CD4-positive, alpha-beta memory T cell (primary cell): ENCODE measurements at regions of chr11 and their contacts with region 1.

Region 1: GRCh38 chr11:117178210-117179034 is at the start of gene SIDT2:
- DNase-seq: peak; percentile 85 to 90 (median 86)
- H3K4me3 ChIP-seq: peak within 1 kb of the TSS; percentile 76 to 80
- H3K4me3 Mint-ChIP-seq: peak within 1 kb of the TSS; percentile 94 to 99 (median 94)
- H3K27ac ChIP-seq: peak within 1 kb of the TSS; percentile 73
- H3K27ac Mint-ChIP-seq: peak within 1 kb of the TSS; percentile 93 to 98 (median 97)
- H3K4me1 ChIP-seq: peaks cover 30% of the 10 kb centered on the region
- H3K4me1 Mint-ChIP-seq: peaks cover 21 to 45% (median 34%) of the 10 kb centered on the region in 4 donors
- H3K27me3 ChIP-seq: no peaks in the 10 kb centered on the region
- H3K27me3 Mint-ChIP-seq: no peaks in the 10 kb centered on the region
- total RNA-seq, gene SIDT2: 60.2 to 67.3 TPM

Region 2: GRCh38 chr11:116772443-116773202 is 405.8 kb before region 1 on chr11 and contains the start of gene BUD13:
- CTCF ChIA-PET with region 1: no interaction called
- POLR2A ChIA-PET with region 1: interaction called, 10 read pairs
- intact Hi-C with region 1: loop called (anchors 5 kb)
- DNase-seq: peak; percentile 92 to 96 (median 93)
- H3K4me3 ChIP-seq: peak within 1 kb of the TSS; percentile 71 to 93
- H3K4me3 Mint-ChIP-seq: peak within 1 kb of the TSS; percentile 97 to 100 (median 98)
- H3K27ac ChIP-seq: peak within 1 kb of the TSS; percentile 94
- H3K27ac Mint-ChIP-seq: peak within 1 kb of the TSS; percentile 94 to 99 (median 98)
- H3K4me1 ChIP-seq: peaks cover 24% of the 10 kb centered on the region
- H3K4me1 Mint-ChIP-seq: peaks cover 24 to 47% (median 35%) of the 10 kb centered on the region in 4 donors
- H3K27me3 ChIP-seq: no peaks in the 10 kb centered on the region
- H3K27me3 Mint-ChIP-seq: no peaks in the 10 kb centered on the region
- total RNA-seq, gene BUD13: 19.9 to 23.1 TPM

Region 3: GRCh38 chr11:117128289-117128688 is 50.1 kb before region 1 on chr11:
- CTCF ChIA-PET with region 1: no interaction called
- POLR2A ChIA-PET with region 1: no interaction called
- intact Hi-C with region 1: no loop called
- DNase-seq: no peak
- H3K4me3 ChIP-seq: no peak overlapping the region
- H3K4me3 Mint-ChIP-seq: no peak overlapping the region
- H3K27ac ChIP-seq: no peak overlapping the region
- H3K27ac Mint-ChIP-seq: no peak overlapping the region
- H3K4me1 ChIP-seq: no peaks in the 10 kb centered on the region
- H3K4me1 Mint-ChIP-seq: peaks cover 0 to 3% (median 1%) of the 10 kb centered on the region in 4 donors
- H3K27me3 ChIP-seq: no peaks in the 10 kb centered on the region
- H3K27me3 Mint-ChIP-seq: peaks cover 0 to 2% of the 10 kb centered on the region in 2 donors

Region 4: GRCh38 chr11:117143871-117144476 is 34.4 kb before region 1 on chr11 and contains the start of gene PAFAH1B2:
- CTCF ChIA-PET with region 1: interaction called, 41 read pairs
- POLR2A ChIA-PET with region 1: interaction called, 75 read pairs
- intact Hi-C with region 1: loop called (anchors 1 kb)
- DNase-seq: peak; percentile 94 to 95 (median 94)
- H3K4me3 ChIP-seq: peak within 1 kb of the TSS; percentile 68 to 93
- H3K4me3 Mint-ChIP-seq: peak within 1 kb of the TSS; percentile 97 to 100 (median 99)
- H3K27ac ChIP-seq: peak within 1 kb of the TSS; percentile 70
- H3K27ac Mint-ChIP-seq: peak within 1 kb of the TSS; percentile 92 to 99 (median 98)
- H3K4me1 ChIP-seq: peaks cover 46% of the 10 kb centered on the region
- H3K4me1 Mint-ChIP-seq: peaks cover 33 to 56% (median 44%) of the 10 kb centered on the region in 4 donors
- H3K27me3 ChIP-seq: no peaks in the 10 kb centered on the region
- H3K27me3 Mint-ChIP-seq: peaks cover 2 to 6% of the 10 kb centered on the region in 2 donors
- total RNA-seq, gene PAFAH1B2: 61.6 to 64.2 TPM

Region 5: GRCh38 chr11:117199061-117199915 is 20.9 kb after region 1 on chr11 and contains the start of gene TAGLN:
- CTCF ChIA-PET with region 1: interaction called, 5 read pairs
- POLR2A ChIA-PET with region 1: interaction called, 17 read pairs
- intact Hi-C with region 1: no loop called
- DNase-seq: no peak
- H3K4me3 ChIP-seq: no peak within 1 kb of the TSS
- H3K4me3 Mint-ChIP-seq: peak within 1 kb of the TSS in 2 of 8 donors; percentile 31 to 36
- H3K27ac ChIP-seq: no peak within 1 kb of the TSS
- H3K27ac Mint-ChIP-seq: peak within 1 kb of the TSS in 6 of 7 donors; percentile 5 to 70 (median 42)
- H3K4me1 ChIP-seq: no peaks in the 10 kb centered on the region
- H3K4me1 Mint-ChIP-seq: peaks cover 1 to 14% (median 6%) of the 10 kb centered on the region in 4 donors
- H3K27me3 ChIP-seq: no peaks in the 10 kb centered on the region
- H3K27me3 Mint-ChIP-seq: no peaks in the 10 kb centered on the region
- total RNA-seq, gene TAGLN: 17.7 to 19.7 TPM

Region 6: GRCh38 chr11:117327567-117328374 is 149.3 kb after region 1 on chr11 and contains the start of gene CEP164:
- CTCF ChIA-PET with region 1: no interaction called
- POLR2A ChIA-PET with region 1: interaction called, 7 read pairs
- intact Hi-C with region 1: loop called (anchors 1 kb)
- DNase-seq: peak; percentile 93 to 97 (median 95)
- H3K4me3 ChIP-seq: peak within 1 kb of the TSS; percentile 76 to 93
- H3K4me3 Mint-ChIP-seq: peak within 1 kb of the TSS in 6 of 8 donors; percentile 6 to 60 (median 42)
- H3K27ac ChIP-seq: peak within 1 kb of the TSS; percentile 85
- H3K27ac Mint-ChIP-seq: peak within 1 kb of the TSS in 3 of 7 donors; percentile 10 to 59 (median 53)
- H3K4me1 ChIP-seq: peaks cover 19% of the 10 kb centered on the region
- H3K4me1 Mint-ChIP-seq: peaks cover 0 to 11% (median 9%) of the 10 kb centered on the region in 4 donors
- H3K27me3 ChIP-seq: no peaks in the 10 kb centered on the region
- H3K27me3 Mint-ChIP-seq: no peaks in the 10 kb centered on the region
- total RNA-seq, gene CEP164: 40.8 to 42.5 TPM